ENCODE measurements at regions of chr16 and their contacts with region 1.

Region 1: DNA sequence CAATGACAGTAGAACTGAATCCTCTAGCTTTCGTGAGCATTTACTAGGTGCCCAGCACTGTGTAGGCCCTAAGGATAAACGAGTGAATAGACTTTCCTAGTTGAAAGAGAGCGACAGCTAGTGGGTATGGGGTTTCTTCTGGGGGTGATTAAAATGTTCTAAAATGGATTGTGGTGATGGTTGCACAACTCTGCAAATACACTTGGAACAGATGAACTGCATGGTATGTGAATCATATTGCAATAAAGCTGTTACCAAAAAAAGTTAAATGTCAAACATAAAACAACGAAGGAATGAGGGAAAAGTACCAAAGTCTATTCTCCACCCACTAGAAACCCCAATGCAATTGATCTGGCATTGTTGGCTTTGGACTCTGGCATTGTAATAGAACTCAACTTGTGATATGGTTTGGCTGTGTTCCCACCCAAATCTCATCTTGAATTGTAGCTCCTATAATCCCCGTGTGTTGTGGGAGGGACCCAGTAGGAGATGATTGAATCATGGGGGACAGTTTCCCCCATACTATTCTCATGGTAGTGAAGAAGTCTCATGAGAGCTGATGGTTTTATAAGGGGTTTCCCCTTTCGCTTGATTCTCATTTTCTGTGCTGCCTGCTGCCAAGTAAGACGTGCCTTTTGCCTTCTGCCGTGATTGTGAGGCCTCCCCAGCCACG is 70.5 kb downstream of the MARF1 start:
- DNase-seq: no peak
- ATAC-seq: no peak
- H3K4me3 ChIP-seq: peak overlapping the region; percentile 42
- H3K27ac ChIP-seq: peak overlapping the region; percentile 91
- H3K4me1 ChIP-seq: peaks cover 24 to 47% of the 10 kb centered on the region in 2 experiments
- H3K27me3 ChIP-seq: no peaks in the 10 kb centered on the region
- CTCF ChIP-seq: no peak
- EP300 ChIP-seq: no peak
- POLR2A ChIP-seq: no peak
- RAD21 ChIP-seq: no peak

Region 2: GRCh38 chr16:15587152-15587825 is 14.8 kb after region 1 on chr16:
- CTCF ChIA-PET with region 1: no interaction called
- POLR2A ChIA-PET with region 1: interaction called, 35 read pairs
- in situ Hi-C with region 1: no loop called
- intact Hi-C with region 1: loop called (anchors 1 kb)
- DNase-seq: no peak
- ATAC-seq: no peak
- H3K4me3 ChIP-seq: no peak overlapping the region
- H3K27ac ChIP-seq: no peak overlapping the region
- H3K4me1 ChIP-seq: peaks cover 26 to 29% of the 10 kb centered on the region in 2 experiments
- H3K27me3 ChIP-seq: no peaks in the 10 kb centered on the region
- CTCF ChIP-seq: no peak
- EP300 ChIP-seq: no peak
- POLR2A ChIP-seq: no peak
- RAD21 ChIP-seq: no peak

Region 3: GRCh38 chr16:15592324-15592723 is 19.9 kb after region 1 on chr16:
- CTCF ChIA-PET with region 1: no interaction called
- POLR2A ChIA-PET with region 1: interaction called, 35 read pairs
- in situ Hi-C with region 1: no loop called
- intact Hi-C with region 1: loop called (anchors 1 kb)
- DNase-seq: no peak
- ATAC-seq: no peak
- H3K4me3 ChIP-seq: no peak overlapping the region
- H3K27ac ChIP-seq: peak overlapping the region; percentile 37; the same call in 1 of the 3 replicates
- H3K4me1 ChIP-seq: peaks cover 28 to 41% of the 10 kb centered on the region in 2 experiments
- H3K27me3 ChIP-seq: no peaks in the 10 kb centered on the region
- CTCF ChIP-seq: no peak
- EP300 ChIP-seq: no peak
- POLR2A ChIP-seq: no peak
- RAD21 ChIP-seq: no peak

Region 4: DNA sequence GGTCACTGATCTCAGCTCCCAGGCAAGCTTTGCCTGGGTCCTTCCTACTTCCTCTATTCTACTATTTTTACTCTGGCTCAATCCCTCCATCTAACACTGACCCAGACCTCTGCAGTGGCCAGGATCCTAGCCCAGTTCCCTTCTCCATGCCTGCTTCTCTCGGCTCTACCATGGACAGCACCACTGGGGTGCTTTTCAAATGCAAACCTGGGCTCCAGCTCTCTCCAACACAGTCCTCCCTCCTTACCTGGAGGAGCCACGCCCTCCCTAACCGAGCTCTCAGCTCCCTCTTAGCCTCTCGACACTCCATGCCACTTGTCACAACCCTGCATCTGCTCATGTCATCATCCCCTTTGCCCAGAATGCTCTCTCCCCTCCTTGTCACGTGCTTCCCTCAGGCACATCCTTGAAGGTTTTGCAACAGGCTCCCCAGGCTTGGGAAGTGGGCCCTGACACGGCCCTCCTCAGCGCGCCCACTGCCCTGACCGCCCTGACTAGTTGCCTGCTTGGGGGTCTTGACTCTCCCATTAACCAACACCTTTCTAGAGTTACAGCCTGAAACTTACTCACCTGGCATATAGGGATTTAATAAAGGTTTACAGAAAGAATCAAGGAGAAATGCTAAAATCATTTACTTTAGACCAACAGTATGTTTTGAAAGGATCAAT is 28.9 kb after region 1 on chr16:
- CTCF ChIA-PET with region 1: no interaction called
- POLR2A ChIA-PET with region 1: interaction called, 16 read pairs
- in situ Hi-C with region 1: no loop called
- intact Hi-C with region 1: no loop called
- DNase-seq: no peak
- ATAC-seq: no peak; the same call in 2 of the 3 replicates
- H3K4me3 ChIP-seq: no peak overlapping the region
- H3K27ac ChIP-seq: no peak overlapping the region
- H3K4me1 ChIP-seq: peaks cover 0 to 4% of the 10 kb centered on the region in 2 experiments; a peak in 4 of 5 replicates
- H3K27me3 ChIP-seq: no peaks in the 10 kb centered on the region
- CTCF ChIP-seq: no peak
- EP300 ChIP-seq: no peak
- POLR2A ChIP-seq: no peak
- RAD21 ChIP-seq: no peak

Region 5: GRCh38 chr16:15643048-15643945 is 70.8 kb after region 1 on chr16 and contains the start of gene MARF1:
- CTCF ChIA-PET with region 1: no interaction called
- POLR2A ChIA-PET with region 1: interaction called, 18 read pairs
- in situ Hi-C with region 1: no loop called
- intact Hi-C with region 1: loop called (anchors 10 kb)
- DNase-seq: peak; percentile 91 to 98 (median 92)
- ATAC-seq: peak; percentile 82
- H3K4me3 ChIP-seq: peak within 1 kb of the TSS; percentile 83
- H3K27ac ChIP-seq: peak within 1 kb of the TSS; percentile 100
- H3K4me1 ChIP-seq: peaks cover 0 to 23% of the 10 kb centered on the region in 2 experiments; a peak in 4 of 5 replicates
- H3K27me3 ChIP-seq: no peaks in the 10 kb centered on the region
- CTCF ChIP-seq: peak; percentile 44 to 58 (median 58); a peak in 5 of 6 replicates
- EP300 ChIP-seq: peak; percentile 26; the same call in 1 of the 2 replicates
- POLR2A ChIP-seq: peak; percentile 97
- RAD21 ChIP-seq: peak in 1 of 2 experiments; percentile 22; a peak in 2 of 4 replicates
- polyA plus RNA-seq, gene MARF1: 4.7 to 5.3 TPM